HepG2 (cell line): ENCODE measurements at regions of chr4 and their contacts with region 1.

Region 1: DNA sequence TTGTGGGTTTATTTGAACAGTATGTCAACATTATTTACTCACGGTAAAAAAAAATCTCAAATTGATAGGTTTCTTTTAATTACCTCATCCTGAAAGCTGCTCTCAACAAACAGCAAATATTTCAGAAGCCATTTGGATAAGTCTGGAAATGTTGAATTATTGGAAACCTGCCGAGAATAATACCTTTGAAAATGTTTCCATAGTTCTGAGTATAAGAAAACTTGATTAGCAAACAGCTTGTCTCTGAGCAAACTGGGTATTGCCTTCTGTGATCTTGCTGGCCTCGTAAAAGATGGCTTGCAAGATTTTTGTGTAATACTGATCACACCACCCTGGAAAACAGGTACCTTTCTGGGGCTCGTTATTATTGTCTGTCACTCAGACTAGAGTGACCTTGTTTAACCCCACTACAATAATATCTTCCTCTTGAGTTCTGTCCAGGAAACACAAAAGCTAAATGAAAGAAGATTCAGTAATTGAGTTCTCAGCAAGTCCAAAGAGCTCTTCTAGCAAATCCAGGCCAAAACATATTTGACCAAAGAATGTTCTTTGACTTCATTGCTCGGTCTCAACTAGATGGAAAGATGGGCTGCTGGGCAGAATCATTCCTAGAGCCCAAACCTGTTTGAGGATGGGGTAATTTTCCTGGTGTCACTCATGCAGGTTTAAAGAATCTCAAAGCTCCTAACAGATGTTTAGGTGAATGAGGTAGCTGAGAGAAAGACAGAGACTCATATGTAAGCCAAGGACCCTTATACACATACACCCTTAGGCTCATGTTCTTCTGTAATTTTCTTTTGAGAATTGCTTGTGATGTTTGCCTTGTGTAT is 255.6 kb upstream of the JADE1 start:
- DNase-seq: no peak
- ATAC-seq: no peak
- H3K4me3 ChIP-seq: peak overlapping the region; percentile 52 to 87 (median 78); a peak in 5 of 6 replicates
- H3K27ac ChIP-seq: no peak overlapping the region
- H3K4me1 ChIP-seq: peaks cover 17% of the 10 kb centered on the region
- H3K27me3 ChIP-seq: peaks cover 0 to 8% of the 10 kb centered on the region in 2 experiments; a peak in 3 of 5 replicates
- CTCF ChIP-seq: no peak
- EP300 ChIP-seq: no peak
- POLR2A ChIP-seq: no peak
- RAD21 ChIP-seq: no peak

Region 2: GRCh38 chr4:128600996-128601871 is 47.3 kb after region 1 on chr4:
- CTCF ChIA-PET with region 1: no interaction called
- POLR2A ChIA-PET with region 1: interaction called, 20 read pairs
- in situ Hi-C with region 1: no loop called
- intact Hi-C with region 1: no loop called
- DNase-seq: peak; percentile 93
- ATAC-seq: peak; percentile 95
- H3K4me3 ChIP-seq: peak overlapping the region; percentile 48 to 70 (median 55)
- H3K27ac ChIP-seq: peak overlapping the region; percentile 63
- H3K4me1 ChIP-seq: peaks cover 41% of the 10 kb centered on the region
- H3K27me3 ChIP-seq: no peaks in the 10 kb centered on the region
- CTCF ChIP-seq: 0 out of 2 replicates have a peak, but pooled peaks have one; percentile 1
- EP300 ChIP-seq: peak in 1 of 2 experiments; percentile 52; a peak in 2 of 4 replicates
- POLR2A ChIP-seq: peak in 1 of 2 experiments; percentile 42; a peak in 1 of 4 replicates
- RAD21 ChIP-seq: no peak